Aorta (tissue), 5 donors: ENCODE measurements at regions of chr11 and their contacts with region 1.

Region 1: GRCh38 chr11:74255741-74256369 is 55.6 kb downstream of the P4HA3 start:
- DNase-seq: peak in 1 of 2 donors; percentile 55
- ATAC-seq: peak; percentile 72
- H3K4me3 ChIP-seq: no peak overlapping the region
- H3K27ac ChIP-seq: no peak overlapping the region
- H3K4me1 ChIP-seq: no peaks in the 10 kb centered on the region
- H3K27me3 ChIP-seq: no peaks in the 10 kb centered on the region

Region 2: GRCh38 chr11:74321487-74322188 is 65.8 kb after region 1 on chr11:
- intact Hi-C with region 1: loop called (anchors 5 to 10 kb)
- DNase-seq: no peak
- ATAC-seq: peak; percentile 64
- H3K4me3 ChIP-seq: no peak overlapping the region
- H3K27ac ChIP-seq: no peak overlapping the region
- H3K4me1 ChIP-seq: peaks cover 3 to 7% of the 10 kb centered on the region in 2 donors
- H3K27me3 ChIP-seq: no peaks in the 10 kb centered on the region

Region 3: GRCh38 chr11:74449369-74449931 is 193.6 kb after region 1 on chr11:
- intact Hi-C with region 1: loop called (anchors 1 to 2 kb)
- DNase-seq: no peak
- ATAC-seq: peak; percentile 86
- H3K4me3 ChIP-seq: no peak overlapping the region
- H3K27ac ChIP-seq: no peak overlapping the region
- H3K4me1 ChIP-seq: no peaks in the 10 kb centered on the region
- H3K27me3 ChIP-seq: no peaks in the 10 kb centered on the region

Region 4: DNA sequence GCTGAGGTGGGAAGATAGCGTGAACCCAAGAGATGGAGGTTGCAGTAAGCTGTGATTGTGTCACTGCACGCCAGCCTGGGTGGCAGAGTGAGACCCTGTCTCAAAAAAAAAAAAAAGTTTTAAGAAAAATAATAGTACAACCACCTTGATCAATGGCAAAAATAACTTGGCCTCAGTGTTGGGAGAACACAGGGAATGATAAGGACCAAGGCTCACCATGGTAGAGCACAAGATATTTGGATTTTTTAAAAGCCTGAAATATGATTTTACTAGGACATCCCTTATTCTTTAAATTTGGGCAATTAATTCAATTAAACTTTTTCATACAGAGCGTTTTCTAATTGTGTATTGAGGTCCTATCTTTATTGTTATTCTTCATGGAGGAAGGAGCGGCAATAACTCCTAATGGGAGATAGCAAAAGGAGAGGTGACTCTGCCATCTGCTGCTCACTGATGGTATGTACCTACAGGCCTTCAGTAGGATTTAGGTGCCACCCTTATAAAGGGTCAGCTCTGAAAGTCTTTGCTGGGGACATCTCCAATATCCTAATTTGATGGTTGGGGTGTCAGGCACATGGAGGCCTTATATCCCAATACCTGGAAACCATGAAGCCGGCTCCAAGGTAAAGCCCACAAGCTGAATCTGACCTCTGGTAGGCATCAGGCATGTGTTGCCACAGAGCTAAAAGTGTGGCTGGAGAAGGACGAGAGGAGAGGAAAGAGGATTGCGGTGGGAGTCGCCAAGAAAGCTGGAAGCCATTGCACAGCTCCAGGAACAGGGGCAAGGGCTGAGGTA is 314.6 kb after region 1 on chr11:
- intact Hi-C with region 1: loop called (anchors 5 to 10 kb)
- DNase-seq: no peak
- ATAC-seq: no peak
- H3K4me3 ChIP-seq: no peak overlapping the region
- H3K27ac ChIP-seq: no peak overlapping the region
- H3K4me1 ChIP-seq: no peaks in the 10 kb centered on the region
- H3K27me3 ChIP-seq: no peaks in the 10 kb centered on the region

Region 5: GRCh38 chr11:74748211-74749127 is 492.6 kb after region 1 on chr11 and contains the start of gene RNF169:
- intact Hi-C with region 1: loop called in 1 of 2 experiments (anchors 10 kb)
- DNase-seq: peak; percentile 97
- ATAC-seq: peak; percentile 100
- H3K4me3 ChIP-seq: peak within 1 kb of the TSS; percentile 91 to 94
- H3K27ac ChIP-seq: peak within 1 kb of the TSS; percentile 76 to 83
- H3K4me1 ChIP-seq: no peaks in the 10 kb centered on the region
- H3K27me3 ChIP-seq: no peaks in the 10 kb centered on the region
- total RNA-seq, gene RNF169: 19.8 to 23.6 TPM